ENCODE measurements at regions of chr14 and their contacts with region 1.

Region 1: DNA sequence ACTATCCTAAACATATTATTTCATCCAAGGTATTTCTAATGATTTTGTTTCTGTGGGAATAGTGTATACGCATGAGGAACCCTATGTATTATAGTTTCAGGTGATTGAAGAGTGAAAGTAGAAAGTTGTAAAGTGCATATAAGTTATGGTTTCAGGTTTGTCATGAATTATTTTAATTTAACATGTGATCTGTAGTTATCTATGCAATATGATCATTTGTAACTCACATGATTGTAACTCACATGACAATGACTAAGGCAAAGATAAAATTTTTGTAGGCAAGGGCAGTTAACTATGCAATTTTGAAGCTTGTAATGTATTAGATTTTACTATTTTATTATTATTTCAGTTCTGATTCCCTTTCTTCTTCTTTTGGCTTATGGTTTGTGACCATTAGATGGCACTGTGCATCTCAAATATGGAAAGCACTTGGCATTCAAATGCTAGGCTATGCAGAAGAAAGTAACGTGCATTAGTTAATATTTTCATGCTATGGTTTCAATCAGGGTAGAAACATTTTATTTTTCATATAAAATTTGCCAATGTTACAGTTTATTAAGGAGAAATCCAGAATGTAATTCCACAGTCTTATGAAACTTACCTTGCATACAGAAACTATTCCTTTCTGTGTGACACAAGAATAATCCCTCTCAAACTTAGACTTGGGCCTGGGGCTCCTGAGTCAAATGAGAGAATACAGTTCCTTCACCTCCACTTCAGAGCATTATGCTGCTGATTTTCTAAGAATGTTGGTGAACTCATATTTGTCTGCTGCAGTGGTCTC is 15.8 kb upstream of the TMEM30B start:
- DNase-seq: peak; percentile 12 to 70
- H3K4me3 ChIP-seq: no peak overlapping the region
- H3K27ac ChIP-seq: no peak overlapping the region
- H3K4me1 ChIP-seq: 0 out of 2 replicates have a peak, but pooled peaks cover 4% of the 10 kb centered on the region
- H3K27me3 ChIP-seq: no peaks in the 10 kb centered on the region
- CTCF ChIP-seq: peak; percentile 84

Region 2: DNA sequence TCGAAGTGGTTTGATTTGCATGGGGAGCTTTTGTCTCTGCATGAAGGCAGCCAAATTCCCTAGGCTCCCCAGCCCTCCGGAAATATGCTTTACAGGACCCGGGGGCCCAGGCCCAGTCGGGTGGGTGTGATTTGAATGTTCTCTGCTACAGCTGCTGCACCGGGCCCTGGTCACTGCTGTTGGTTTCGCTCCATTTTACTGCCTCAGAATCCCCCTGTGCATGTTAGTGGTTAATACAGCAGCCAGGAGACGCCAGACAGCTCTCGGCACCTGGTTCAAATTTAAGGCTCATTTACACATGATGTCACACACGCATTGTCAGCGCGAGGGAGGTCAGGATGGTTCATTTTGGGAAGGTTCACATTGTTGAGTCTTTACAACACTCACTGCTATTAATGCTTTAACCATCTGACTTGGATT is 216.3 kb before region 1 on chr14:
- CTCF ChIA-PET with region 1: no interaction called
- POLR2A ChIA-PET with region 1: no interaction called
- intact Hi-C with region 1: no loop called
- DNase-seq: no peak
- H3K4me3 ChIP-seq: no peak overlapping the region
- H3K27ac ChIP-seq: no peak overlapping the region
- H3K4me1 ChIP-seq: no peaks in the 10 kb centered on the region
- H3K27me3 ChIP-seq: no peaks in the 10 kb centered on the region
- CTCF ChIP-seq: no peak

Region 3: GRCh38 chr14:61381547-61381946 is 84.6 kb after region 1 on chr14:
- CTCF ChIA-PET with region 1: no interaction called
- POLR2A ChIA-PET with region 1: no interaction called
- intact Hi-C with region 1: loop called (anchors 2 kb)
- DNase-seq: peak; percentile 61 to 73
- H3K4me3 ChIP-seq: no peak overlapping the region
- H3K27ac ChIP-seq: peak overlapping the region; percentile 36
- H3K4me1 ChIP-seq: peaks cover 54% of the 10 kb centered on the region
- H3K27me3 ChIP-seq: no peaks in the 10 kb centered on the region
- CTCF ChIP-seq: no peak

Region 4: GRCh38 chr14:61456720-61457119 is 159.8 kb after region 1 on chr14:
- CTCF ChIA-PET with region 1: no interaction called
- POLR2A ChIA-PET with region 1: no interaction called
- intact Hi-C with region 1: loop called (anchors 1 kb)
- DNase-seq: peak; percentile 65 to 72
- H3K4me3 ChIP-seq: no peak overlapping the region
- H3K27ac ChIP-seq: no peak overlapping the region
- H3K4me1 ChIP-seq: peaks cover 13% of the 10 kb centered on the region
- H3K27me3 ChIP-seq: no peaks in the 10 kb centered on the region
- CTCF ChIP-seq: peak; percentile 94

Region 5: GRCh38 chr14:61461808-61462275 is 164.9 kb after region 1 on chr14:
- CTCF ChIA-PET with region 1: no interaction called
- POLR2A ChIA-PET with region 1: no interaction called
- intact Hi-C with region 1: loop called (anchors 1 kb)
- DNase-seq: peak; percentile 48 to 70
- H3K4me3 ChIP-seq: no peak overlapping the region
- H3K27ac ChIP-seq: peak overlapping the region; percentile 66
- H3K4me1 ChIP-seq: peaks cover 56% of the 10 kb centered on the region
- H3K27me3 ChIP-seq: no peaks in the 10 kb centered on the region
- CTCF ChIP-seq: peak; percentile 93

Region 6: DNA sequence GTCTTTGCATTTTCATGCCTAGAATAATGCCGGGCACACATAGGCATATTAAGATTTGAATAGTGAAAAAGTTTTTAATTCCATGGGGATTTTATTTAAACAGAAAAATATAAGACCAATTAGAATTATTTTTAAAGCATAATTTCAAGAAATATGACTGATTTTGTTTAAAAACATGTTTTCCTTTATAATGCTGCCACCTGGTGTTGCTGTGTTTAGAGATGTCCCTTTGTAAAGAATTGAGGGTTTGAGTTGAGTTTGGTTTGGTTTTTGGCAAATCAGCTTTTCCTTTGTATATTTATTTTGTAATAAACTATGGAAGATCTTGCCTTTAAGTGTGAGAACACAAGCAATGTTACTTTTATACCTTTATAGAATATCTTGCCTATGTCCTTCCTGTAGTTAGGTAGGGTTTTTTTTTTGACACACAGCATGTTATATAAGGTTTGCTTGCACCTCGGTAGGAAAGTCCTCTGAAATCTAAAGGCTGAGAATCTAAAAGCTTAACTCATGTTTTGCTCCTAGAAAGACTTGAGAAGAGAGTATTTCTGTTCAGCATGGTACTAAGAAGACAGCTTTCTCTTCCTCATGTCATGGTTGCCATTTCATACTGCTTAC is 434.0 kb after region 1 on chr14:
- CTCF ChIA-PET with region 1: no interaction called
- POLR2A ChIA-PET with region 1: no interaction called
- intact Hi-C with region 1: loop called (anchors 10 kb)
- DNase-seq: no peak
- H3K4me3 ChIP-seq: no peak overlapping the region
- H3K27ac ChIP-seq: peak overlapping the region; percentile 35
- H3K4me1 ChIP-seq: no peaks in the 10 kb centered on the region
- H3K27me3 ChIP-seq: no peaks in the 10 kb centered on the region
- CTCF ChIP-seq: peak; percentile 73